ENCODE measurements at regions of chrX and their contacts with region 1.

Region 1: GRCh38 chrX:76148753-76149152 is 24.1 kb upstream of the PBDC1 start:
- DNase-seq: peak; percentile 57
- H3K4me3 Mint-ChIP-seq: peak overlapping the region; percentile 74
- H3K27ac Mint-ChIP-seq: peak overlapping the region; percentile 99
- H3K4me1 Mint-ChIP-seq: peaks cover 11% of the 10 kb centered on the region
- H3K27me3 Mint-ChIP-seq: no peaks in the 10 kb centered on the region

Region 2: DNA sequence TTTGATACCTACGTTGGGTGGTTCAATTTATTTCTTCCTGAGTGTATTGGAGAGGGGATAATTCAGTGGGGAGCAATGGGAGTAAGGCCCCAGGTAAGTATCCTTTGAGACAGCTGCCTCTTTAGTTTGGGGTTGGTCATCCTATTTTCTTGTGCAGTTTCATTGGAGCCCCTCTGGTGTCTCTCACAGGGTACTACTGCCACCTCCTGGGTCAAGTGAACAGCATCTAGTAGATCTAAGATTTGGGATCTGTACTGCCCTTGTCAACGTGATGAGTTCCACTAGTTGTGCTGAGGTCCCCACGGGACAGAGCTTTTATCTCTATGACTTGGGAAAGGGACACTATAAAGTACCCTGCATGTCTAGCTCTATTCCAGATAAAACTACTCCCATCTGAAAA is 104.7 kb after region 1 on chrX:
- CTCF ChIA-PET with region 1: interaction called, 8 read pairs
- POLR2A ChIA-PET with region 1: no interaction called
- intact Hi-C with region 1: loop called (anchors 5 kb)
- DNase-seq: peak; percentile 42
- H3K4me3 Mint-ChIP-seq: no peak overlapping the region
- H3K27ac Mint-ChIP-seq: no peak overlapping the region
- H3K4me1 Mint-ChIP-seq: no peaks in the 10 kb centered on the region
- H3K27me3 Mint-ChIP-seq: no peaks in the 10 kb centered on the region

Measured in activated CD4-positive, alpha-beta memory T cell treated with anti-CD3 and anti-CD28 coated beads for 36 hours (primary cell).